ENCODE measurements at regions of chr17 and their contacts with region 1.

Region 1: DNA sequence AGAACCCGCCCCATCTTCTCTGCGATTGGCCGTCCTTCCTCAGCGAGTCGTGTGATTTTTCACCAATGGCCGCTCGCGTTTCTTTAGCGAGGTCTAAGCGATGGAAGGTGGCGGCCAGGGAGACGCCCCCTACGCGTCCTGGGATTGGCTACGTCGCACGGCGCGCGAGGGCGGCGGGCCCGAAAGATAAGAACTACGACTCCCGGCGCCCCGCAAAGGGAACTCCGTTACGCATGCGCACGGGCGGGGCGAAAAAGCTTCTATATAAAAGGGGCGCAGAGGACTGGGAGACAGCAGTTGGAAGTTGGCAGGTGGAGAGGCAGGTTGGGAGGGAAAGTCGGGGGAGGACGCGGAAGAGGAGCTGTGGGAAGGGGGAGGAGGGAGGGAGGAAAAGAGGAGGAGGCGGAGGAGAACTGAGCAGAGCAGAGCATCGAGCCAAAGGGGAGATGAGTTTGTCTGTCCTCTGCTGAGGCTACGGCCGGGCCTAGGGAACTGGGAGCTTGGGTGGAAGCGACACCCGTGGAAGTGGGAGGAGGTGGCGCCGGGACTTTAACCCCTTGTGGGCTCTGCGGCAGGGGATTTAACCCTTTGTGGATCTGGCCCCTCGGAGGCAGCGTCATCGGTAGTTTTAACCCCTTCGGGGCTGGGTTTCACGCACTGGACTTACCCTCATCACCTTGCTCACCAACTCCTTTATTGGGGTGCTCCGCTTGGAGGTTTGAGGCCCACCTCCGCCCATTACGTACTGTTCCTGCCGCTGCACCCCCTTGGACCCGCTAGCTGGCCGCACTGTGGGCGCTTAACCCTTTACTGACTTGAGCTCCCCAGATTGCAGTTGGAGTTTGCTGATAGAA is at the start of gene HEXIM1:
- DNase-seq: peak; percentile 99
- H3K4me3 Mint-ChIP-seq: peak within 1 kb of the TSS; percentile 97
- H3K27ac Mint-ChIP-seq: peak within 1 kb of the TSS; percentile 100
- H3K4me1 Mint-ChIP-seq: peaks cover 42% of the 10 kb centered on the region
- H3K27me3 Mint-ChIP-seq: no peaks in the 10 kb centered on the region
- total RNA-seq, gene HEXIM1: 24.3 to 24.7 TPM

Region 2: DNA sequence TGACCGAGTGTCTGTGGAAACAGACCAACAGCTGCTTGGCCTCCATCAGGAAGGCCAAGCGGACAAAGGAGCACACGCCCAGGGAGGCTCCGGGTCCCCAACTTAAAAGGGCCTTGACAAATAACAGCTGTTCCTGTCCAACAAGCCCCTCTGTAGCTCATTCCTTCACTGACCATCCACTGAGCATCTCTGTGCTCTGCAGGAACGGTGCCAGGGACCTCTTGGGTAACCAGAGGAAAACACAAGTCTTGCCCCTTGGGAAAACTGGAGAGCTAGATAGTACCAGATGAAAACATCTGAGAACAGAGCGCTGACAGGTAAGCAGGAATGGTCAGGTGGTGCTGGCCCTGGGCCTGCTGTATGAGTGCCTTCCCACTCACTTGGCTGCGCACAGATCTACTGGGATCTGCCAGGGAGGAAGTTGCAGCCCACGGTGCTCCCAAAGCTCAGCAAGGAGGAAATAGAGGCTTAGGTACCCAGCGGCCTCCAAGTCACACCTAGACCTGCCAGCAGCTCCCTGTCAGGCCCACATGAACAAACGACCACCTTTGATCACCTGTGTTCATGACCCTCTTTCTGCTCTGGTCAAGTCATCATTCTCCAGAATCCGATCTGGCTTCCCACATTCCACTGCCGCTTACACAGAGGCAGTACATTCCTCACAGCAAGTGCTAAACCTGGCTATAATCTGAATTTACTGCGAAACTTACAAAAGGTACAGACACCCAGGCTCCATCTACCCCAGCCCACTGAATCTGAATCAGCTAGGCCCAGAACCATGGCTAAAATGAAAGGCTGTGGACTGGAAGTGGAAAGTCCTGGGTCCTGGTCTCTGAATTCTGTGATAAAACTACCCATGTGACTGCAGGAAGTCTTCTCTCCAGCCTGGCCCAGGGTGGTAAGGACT is 109.4 kb before region 1 on chr17:
- CTCF ChIA-PET with region 1: no interaction called
- intact Hi-C with region 1: no loop called
- DNase-seq: no peak
- H3K4me3 Mint-ChIP-seq: no peak overlapping the region
- H3K27ac Mint-ChIP-seq: no peak overlapping the region
- H3K4me1 Mint-ChIP-seq: peaks cover 22% of the 10 kb centered on the region
- H3K27me3 Mint-ChIP-seq: no peaks in the 10 kb centered on the region

Region 3: DNA sequence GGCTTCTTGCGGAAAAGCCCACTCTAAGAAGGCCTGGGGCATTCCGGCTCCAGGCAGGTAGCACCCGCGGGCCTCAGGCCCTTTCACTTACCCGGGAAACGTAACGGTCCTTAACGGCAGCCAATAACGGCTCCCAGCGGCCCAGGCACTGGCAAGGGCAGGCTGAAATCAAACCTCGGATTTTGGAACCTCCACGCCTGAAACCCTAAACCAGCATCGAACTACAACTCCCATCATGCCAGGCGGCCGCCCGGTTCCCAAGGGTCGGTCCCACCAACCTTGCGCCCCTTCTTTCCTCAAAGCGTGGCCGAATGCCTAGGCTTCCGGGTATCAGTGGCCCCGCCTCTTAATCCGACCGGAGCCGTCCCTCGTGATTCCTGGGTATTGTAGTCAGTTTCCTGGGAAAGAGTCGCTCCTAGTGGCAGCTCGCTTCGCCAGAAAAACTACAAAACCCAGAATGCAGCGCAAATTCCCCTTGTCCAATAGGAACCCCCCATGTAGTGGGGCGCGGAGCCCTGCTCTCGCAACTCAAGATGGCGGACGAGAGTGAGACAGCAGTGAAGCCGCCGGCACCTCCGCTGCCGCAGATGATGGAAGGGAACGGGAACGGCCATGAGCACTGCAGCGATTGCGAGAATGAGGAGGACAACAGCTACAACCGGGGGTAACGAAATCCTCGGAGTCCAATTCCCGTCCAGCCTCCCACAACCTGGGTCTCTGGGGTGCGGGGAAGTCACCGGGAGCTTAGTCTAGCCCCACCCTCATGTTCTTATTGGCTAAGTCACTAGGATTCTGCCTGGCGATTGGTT is 87.4 kb before region 1 on chr17 and contains the start of gene NMT1:
- CTCF ChIA-PET with region 1: no interaction called
- intact Hi-C with region 1: loop called (anchors 1 kb)
- DNase-seq: peak; percentile 99
- H3K4me3 Mint-ChIP-seq: peak within 1 kb of the TSS; percentile 87
- H3K27ac Mint-ChIP-seq: peak within 1 kb of the TSS; percentile 93
- H3K4me1 Mint-ChIP-seq: peaks cover 47% of the 10 kb centered on the region
- H3K27me3 Mint-ChIP-seq: no peaks in the 10 kb centered on the region
- total RNA-seq, gene NMT1: 234 to 235 TPM

Region 4: GRCh38 chr17:45172454-45173286 is 24.3 kb after region 1 on chr17:
- CTCF ChIA-PET with region 1: interaction called, 23 read pairs
- intact Hi-C with region 1: loop called (anchors 1 kb)
- DNase-seq: peak; percentile 65
- H3K4me3 Mint-ChIP-seq: peak overlapping the region; percentile 71
- H3K27ac Mint-ChIP-seq: peak overlapping the region; percentile 93
- H3K4me1 Mint-ChIP-seq: peaks cover 21% of the 10 kb centered on the region
- H3K27me3 Mint-ChIP-seq: no peaks in the 10 kb centered on the region

Region 5: DNA sequence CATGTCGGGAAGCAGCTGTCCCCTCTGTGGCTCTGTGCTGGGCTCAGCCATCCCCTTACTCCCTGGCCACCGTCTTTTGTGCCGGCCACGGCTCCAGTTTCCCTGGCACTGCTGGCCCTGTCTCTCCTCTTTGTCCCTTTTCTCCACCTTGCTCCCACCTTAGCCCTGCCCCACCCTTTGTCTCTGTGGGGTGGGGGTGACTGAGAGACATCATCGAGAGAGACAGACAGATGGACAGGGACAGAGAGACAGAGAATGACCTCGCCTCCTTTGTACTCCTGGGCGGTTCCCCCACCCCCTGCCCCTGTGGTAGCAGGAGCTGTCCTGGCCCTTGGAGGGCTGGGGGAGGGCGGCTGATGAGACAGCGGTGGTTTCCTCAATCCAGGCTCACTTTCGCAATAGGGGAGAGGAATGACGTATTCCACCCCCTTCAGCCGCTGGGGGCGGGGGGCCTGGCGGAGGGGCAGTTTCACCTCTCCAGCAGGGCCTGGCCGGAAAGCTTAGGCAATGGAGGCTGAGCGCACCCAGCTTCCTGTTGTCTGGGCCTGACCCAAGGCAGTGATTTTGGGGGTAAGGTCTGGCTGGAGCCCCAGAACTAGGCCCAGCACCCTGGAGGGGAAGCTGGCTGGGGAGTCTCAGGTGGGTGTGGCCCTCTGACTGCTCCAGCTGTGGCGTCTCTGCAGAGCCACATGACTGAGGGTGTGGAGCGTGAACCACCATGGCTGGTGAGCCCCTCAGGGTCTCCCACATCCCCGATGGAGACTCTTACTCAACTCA is 80.5 kb after region 1 on chr17:
- CTCF ChIA-PET with region 1: interaction called, 24 read pairs
- intact Hi-C with region 1: no loop called
- DNase-seq: peak; percentile 96
- H3K4me3 Mint-ChIP-seq: peak overlapping the region; percentile 100
- H3K27ac Mint-ChIP-seq: peak overlapping the region; percentile 100
- H3K4me1 Mint-ChIP-seq: peaks cover 82% of the 10 kb centered on the region
- H3K27me3 Mint-ChIP-seq: no peaks in the 10 kb centered on the region

Region 6: DNA sequence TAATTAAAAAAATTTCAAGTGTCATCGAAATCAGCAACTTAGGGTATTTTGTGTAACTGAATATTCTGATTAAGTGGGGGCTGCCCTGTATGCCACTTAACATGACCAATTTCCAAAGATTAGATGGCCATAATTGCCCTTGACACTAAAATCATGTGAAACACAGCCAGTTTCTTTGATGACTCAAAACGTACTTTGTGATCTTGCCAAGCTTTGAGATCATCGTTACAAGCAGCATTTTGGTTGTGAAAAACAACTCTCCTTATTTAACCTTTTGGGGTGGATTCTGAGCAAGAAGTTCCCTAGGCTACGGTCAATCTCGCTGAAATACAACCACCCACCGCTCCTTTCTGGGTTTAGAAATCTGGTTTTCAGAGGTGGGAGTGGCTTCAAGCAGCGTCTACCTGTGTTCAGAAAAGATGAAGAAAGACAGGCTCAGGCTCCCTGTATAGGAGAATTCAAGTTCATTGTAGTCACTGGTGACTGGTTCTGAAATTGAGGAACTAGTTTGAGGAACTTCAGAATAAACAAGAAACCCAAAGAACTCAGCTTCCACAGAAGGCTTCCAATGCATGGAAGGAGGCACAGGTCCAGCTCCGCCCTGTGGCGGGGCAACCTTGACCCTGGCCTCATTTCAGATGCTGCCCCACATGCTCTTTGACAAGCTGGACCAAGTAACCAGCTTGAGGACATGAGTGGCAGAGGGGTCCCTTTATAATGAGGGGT is 159.0 kb after region 1 on chr17:
- CTCF ChIA-PET with region 1: interaction called, 4 read pairs
- intact Hi-C with region 1: loop called (anchors 1 kb)
- DNase-seq: peak; percentile 77
- H3K4me3 Mint-ChIP-seq: peak overlapping the region; percentile 48
- H3K27ac Mint-ChIP-seq: peak overlapping the region; percentile 91
- H3K4me1 Mint-ChIP-seq: peaks cover 87% of the 10 kb centered on the region
- H3K27me3 Mint-ChIP-seq: no peaks in the 10 kb centered on the region

Measured in activated naive CD4-positive, alpha-beta T cell treated with anti-CD3 and anti-CD28 coated beads for 36 hours (primary cell).